ENCODE measurements at regions of chr13 and their contacts with region 1.

Region 1: GRCh38 chr13:64617231-64617630 is 2612.9 kb downstream of the PCDH9 start:
- DNase-seq: no peak
- ATAC-seq: no peak
- H3K4me3 ChIP-seq: no peak overlapping the region
- H3K27ac ChIP-seq: no peak overlapping the region
- H3K4me1 ChIP-seq: no peaks in the 10 kb centered on the region
- H3K27me3 ChIP-seq: no peaks in the 10 kb centered on the region

Region 2: DNA sequence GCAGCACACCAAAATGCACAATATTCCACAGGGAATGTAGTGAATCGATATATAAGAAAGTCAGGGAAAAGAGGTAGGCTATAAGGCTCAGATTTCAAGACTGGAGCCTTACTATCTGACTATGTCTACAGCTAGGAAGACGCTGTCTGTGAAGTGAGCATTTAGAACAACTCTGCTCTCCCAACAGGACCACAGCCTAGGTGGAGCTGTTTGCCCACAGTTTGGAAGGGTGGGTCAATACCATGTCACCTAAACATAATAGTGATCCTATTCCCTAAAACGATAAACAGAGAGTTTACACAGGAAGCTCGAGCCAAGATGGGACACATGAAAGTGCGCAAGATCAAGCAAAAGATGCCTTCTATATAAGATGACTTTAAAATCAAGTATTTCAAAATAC is 715.6 kb before region 1 on chr13:
- intact Hi-C with region 1: loop called in 1 of 2 experiments (anchors 5 kb)
- DNase-seq: no peak
- ATAC-seq: no peak
- H3K4me3 ChIP-seq: no peak overlapping the region
- H3K27ac ChIP-seq: no peak overlapping the region
- H3K4me1 ChIP-seq: no peaks in the 10 kb centered on the region
- H3K27me3 ChIP-seq: no peaks in the 10 kb centered on the region

Region 3: DNA sequence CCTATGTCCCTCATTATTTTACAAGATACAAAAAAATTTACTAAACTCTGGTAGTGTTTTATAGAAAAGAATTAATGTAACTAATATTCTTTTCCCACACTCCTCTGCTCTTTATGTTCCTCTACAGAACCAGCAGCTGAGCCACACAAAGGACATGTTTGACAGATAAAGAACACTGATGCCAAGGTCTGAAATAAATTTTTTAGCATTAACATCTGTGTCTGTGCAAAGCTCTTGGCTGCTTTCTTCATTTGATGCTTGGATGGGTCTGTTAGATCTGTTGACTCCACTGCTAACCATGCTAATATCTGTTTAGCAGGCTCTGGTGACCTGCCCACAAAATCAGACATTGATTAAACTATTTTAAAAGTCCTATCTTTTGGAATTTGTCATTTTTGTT is 249.1 kb after region 1 on chr13:
- intact Hi-C with region 1: no loop called
- DNase-seq: no peak
- ATAC-seq: no peak
- H3K4me3 ChIP-seq: no peak overlapping the region
- H3K27ac ChIP-seq: no peak overlapping the region
- H3K4me1 ChIP-seq: no peaks in the 10 kb centered on the region
- H3K27me3 ChIP-seq: no peaks in the 10 kb centered on the region

Measured in aorta (tissue), 5 donors.